ENCODE measurements at regions of chr12 and their contacts with region 1.

Region 1: DNA sequence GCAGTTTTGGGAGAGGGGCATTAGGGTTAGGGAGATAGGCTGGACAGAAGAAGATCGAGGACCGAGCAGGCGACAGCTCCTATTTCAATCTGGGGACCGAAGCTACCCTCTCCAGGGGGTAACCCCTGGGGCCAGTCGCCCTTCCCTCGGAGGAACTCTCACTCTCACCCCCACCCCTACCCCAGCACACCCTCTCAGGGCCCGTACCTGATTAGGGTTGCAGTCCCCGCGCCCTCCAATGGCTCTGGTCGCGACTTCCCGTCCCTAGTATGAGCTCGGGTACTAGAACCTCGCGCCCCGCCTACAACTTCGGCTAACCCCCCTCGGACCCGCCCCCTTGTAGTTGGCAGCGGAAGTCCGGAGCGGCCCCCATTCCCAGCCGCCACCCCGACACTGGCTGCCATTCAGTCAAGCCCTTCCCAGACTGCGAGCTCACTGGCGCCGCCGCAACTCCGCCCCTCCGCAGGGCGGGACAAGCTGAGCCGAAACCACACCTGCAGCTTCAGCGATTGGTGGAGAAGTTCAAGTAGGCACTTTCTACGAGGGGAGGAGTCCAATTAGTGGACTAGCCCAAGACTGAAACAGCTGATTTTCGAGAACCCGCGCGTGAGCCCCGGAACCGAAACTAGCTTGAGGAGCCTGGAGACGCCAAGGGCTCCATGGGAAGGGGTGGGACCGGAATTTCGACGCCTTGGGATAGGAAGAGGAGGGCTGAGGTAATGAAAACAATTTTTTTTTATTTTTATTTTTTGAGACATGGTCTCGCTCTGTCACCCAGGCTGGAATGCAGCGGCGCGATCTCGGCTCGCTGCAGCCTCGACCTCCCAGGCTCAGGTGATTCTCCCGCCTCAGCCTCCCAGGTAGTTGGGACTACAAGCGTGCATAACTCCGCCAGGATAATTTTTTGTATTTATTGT is at the start of gene STAT2:
- DNase-seq: peak; percentile 100
- total RNA-seq, gene STAT2: 41.1 TPM

Region 2: DNA sequence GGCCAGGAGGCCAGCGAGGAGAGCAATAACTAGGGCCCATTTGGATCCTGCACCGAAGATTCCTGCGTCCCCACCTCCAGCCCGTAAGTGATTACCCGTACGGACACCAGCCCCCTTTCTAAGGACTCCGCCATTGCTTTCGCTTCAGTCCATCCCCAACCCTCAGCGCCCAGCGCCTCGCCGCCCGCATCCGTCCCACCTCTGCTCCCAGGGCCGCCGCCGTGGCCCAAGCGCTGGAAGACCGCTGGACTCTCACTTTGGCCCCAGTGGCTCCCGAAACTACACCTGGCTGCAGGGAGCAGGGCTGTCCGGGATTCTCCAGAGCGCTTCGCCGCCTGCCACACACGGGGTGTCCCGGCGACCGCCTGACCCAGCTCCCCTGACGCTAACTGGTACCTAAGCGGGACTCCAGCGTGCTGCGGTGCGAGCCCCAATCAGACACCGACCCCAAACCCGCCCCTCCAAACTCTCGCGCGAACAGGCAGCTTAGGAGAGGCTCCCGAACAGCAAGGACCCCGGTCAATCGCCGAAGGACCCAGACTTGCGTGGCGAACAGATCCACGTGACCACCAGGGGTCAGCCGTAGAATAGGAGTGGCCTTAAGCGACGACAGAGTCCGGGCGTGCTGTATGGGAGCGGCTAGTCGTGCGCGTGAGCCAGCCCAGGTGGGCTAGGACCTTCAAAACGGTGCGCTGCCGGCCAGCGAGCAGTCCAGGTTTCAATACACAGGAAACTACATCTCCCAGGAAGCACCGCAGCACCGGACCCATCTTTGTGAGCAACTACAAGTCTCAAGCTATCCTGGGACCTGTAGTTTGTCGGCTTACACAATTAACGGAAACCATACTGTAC is 44.3 kb before region 1 on chr12 and contains the start of gene CNPY2:
- intact Hi-C with region 1: loop called (anchors 1 kb)
- DNase-seq: peak; percentile 95
- total RNA-seq, gene CNPY2: 38.0 TPM

Region 3: DNA sequence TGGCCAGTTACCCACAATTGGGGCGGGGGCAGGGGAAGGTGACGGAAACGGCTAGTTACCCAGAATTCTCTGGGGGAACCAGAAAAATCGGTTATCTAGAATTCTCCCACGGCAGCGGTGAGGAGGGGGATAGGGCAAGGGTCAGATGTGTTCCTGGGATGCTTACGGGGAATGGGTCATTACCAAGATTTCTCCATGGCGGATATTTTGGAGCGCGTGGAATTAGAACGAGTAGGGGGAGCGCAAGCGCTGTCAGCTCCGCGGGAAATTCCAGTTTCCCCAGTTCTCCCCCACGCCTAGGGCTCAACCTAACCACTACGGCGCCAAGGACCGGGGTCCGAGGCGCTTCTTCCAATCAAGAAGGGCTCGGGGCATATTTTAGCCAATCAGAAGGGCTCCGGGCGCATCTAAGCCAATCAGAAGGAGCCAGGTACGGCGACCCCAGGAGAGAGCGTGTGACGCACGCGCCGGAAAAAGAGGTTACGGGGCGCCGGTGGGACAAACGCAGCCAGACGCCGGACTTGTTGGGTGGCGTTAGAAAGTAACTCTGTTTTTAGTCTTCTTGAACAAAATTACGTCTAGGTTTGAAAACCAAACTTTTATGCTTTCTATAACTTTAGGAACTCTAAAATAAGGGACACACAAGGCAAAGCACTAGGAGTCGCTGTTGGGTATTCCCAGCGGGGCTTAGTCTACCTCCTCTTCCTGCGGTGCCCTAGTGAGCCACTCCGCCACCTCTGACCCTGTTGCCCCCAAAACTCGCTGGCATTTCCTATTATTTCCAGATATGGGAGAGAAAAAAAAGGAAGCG is 26.2 kb before region 1 on chr12 and contains the start of gene PAN2:
- intact Hi-C with region 1: loop called (anchors 2 kb)
- DNase-seq: peak; percentile 96
- total RNA-seq, gene PAN2: 46.3 TPM

Region 4: DNA sequence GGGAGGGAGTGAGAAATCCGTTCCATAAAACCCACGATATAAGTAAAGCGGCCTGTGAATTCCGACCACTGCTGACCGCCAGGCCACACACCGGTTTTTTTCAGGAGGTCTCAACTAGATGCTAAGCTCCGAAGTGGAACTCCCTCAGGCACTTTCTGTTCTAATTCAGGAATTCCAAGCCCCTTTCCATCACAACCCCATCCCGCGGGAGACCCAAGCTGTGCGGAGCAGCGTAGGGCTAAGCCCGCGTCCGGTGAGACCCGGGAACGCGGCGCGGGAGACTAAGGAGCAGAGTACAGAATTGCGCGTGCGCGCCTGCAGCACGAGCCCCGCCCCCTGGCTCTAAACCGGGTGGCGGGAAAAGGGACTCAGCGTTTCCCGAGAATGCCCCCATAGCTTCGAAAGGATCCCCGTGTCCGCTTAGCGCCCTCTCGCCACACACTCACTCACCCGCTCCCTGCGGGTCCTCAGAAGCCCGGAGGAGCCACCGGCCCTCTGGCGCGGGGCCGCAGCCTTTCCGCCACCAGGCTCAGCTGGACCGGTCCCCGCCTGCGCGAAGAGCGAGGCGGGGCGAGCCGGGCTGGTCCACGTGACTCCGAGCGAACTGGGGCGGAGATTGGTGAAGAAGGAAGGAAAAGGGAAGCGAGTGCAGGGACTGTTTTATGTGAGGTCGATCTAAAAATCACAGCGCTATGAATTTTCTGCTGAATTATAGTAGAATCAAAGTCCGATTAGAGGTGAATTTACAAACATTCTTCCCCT is 88.9 kb after region 1 on chr12 and contains the start of gene TIMELESS:
- intact Hi-C with region 1: loop called (anchors 5 kb)
- DNase-seq: peak; percentile 96
- total RNA-seq, gene TIMELESS: 2.0 TPM

Region 5: GRCh38 chr12:56468216-56469006 is 108.3 kb after region 1 on chr12 and contains the start of gene SPRYD4:
- intact Hi-C with region 1: loop called (anchors 5 kb)
- DNase-seq: peak; percentile 97
- total RNA-seq, gene SPRYD4: 3.3 TPM

Measured in cardiac septum (tissue), 1 donor.